H1 (cell line): ENCODE measurements at regions of chr2 and their contacts with region 1.

Region 1: DNA sequence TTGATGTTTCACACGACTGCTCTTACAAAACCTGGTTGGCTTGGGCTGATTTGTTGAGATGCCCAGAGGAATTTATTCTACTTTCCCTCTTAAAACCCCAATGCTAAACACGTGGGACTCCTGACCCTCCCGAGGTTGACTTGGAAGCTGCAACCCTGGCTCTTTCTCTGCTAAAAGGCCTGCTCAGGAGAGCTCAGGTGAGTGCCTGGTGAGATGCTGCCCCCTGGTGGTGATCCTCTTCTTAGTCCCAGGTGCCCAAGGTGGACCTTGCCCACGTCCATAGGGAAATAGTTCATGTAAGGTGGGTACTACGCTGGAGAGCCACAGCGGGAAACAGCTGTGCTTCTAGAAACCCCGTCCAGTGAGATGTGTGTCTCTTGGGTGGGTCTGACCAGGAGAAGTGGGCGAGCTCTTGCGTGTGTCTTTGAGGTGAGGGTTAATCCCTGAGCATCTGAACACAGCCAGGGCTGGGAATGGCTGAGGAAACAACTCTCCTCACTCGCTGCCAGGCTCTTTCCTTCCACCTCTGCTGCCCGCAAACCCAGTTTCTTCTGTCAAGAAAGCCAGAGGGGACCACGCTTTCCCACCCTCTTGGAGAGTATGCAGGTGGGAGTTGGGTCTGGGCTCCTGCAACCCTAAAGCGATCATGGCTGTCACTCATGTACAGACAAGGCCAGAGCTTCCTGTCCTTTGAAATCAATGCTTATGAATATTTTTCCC is 25.5 kb upstream of the PXDN start:
- DNase-seq: peak; percentile 87 to 95
- H3K4me3 ChIP-seq: no peak overlapping the region
- H3K27ac ChIP-seq: no peak overlapping the region
- H3K4me1 ChIP-seq: peaks cover 3 to 20% (median 14%) of the 10 kb centered on the region in 4 experiments
- H3K27me3 ChIP-seq: no peaks in the 10 kb centered on the region; a peak in 1 of 7 replicates
- CTCF ChIP-seq: peak; percentile 91 to 98 (median 95)
- EP300 ChIP-seq: no peak
- POLR2A ChIP-seq: no peak
- RAD21 ChIP-seq: peak; percentile 98

Region 2: GRCh38 chr2:1550658-1551316 is 219.1 kb before region 1 on chr2:
- CTCF ChIA-PET with region 1: interaction called, 65 read pairs
- POLR2A ChIA-PET with region 1: no interaction called
- DNase-seq: peak in 1 of 2 experiments; percentile 91
- H3K4me3 ChIP-seq: no peak overlapping the region
- H3K27ac ChIP-seq: no peak overlapping the region
- H3K4me1 ChIP-seq: no peaks in the 10 kb centered on the region
- H3K27me3 ChIP-seq: peaks cover 0 to 4% (median 3%) of the 10 kb centered on the region in 4 experiments; a peak in 3 of 7 replicates
- CTCF ChIP-seq: peak; percentile 85 to 94 (median 91)
- EP300 ChIP-seq: no peak
- POLR2A ChIP-seq: no peak
- RAD21 ChIP-seq: peak; percentile 71 to 81

Region 3: GRCh38 chr2:1617566-1617982 is 152.3 kb before region 1 on chr2:
- CTCF ChIA-PET with region 1: no interaction called
- POLR2A ChIA-PET with region 1: no interaction called
- DNase-seq: no peak
- H3K4me3 ChIP-seq: no peak overlapping the region
- H3K27ac ChIP-seq: no peak overlapping the region
- H3K4me1 ChIP-seq: peaks cover 12 to 31% (median 22%) of the 10 kb centered on the region in 4 experiments
- H3K27me3 ChIP-seq: no peaks in the 10 kb centered on the region; a peak in 1 of 7 replicates
- CTCF ChIP-seq: no peak
- EP300 ChIP-seq: no peak
- POLR2A ChIP-seq: no peak
- RAD21 ChIP-seq: no peak

Region 4: DNA sequence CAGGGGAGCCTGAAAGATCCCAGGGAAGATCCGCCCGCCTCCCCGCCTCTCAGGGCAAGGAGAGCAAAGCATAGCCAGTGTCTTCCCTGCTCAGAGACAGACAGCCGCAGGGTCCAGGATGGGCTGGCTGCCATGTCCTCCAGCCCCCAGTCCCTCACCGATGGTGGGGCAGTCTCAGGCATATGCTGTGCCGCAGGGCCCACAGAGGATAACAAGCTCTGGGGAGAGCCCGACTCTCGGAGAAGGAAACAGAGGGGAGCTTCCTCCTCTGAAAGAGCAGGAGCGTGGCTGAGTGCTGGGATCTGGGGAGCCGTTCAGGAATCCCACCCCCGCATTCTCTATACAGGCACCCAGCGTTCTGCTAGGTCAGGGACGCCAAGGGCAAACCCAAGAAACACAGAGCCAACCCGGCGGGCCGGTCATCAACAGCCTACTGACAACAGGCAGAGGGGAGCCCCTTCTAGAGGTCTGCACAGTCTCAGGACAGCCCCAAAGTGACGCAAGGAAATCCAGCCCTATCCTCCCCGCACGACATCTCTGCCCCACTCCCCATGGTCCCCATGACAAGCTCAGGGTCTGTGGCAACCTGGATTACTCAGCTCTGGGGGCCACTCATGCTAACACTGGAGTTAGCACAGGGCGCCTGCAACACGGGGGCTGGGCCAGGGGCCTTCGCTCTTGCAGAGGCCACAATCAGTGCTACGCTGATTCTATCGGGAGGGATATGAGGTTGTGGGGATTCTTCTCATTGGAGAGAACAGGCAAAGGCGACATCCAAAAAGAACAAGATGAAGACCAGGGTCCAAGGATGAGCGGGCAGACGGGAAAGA is 107.3 kb before region 1 on chr2:
- CTCF ChIA-PET with region 1: interaction called, 14 read pairs
- POLR2A ChIA-PET with region 1: no interaction called
- DNase-seq: no peak
- H3K4me3 ChIP-seq: no peak overlapping the region
- H3K27ac ChIP-seq: no peak overlapping the region; the same call in 1 of the 2 replicates
- H3K4me1 ChIP-seq: 0 out of 7 replicates have a peak, but pooled peaks cover 0 to 2% (median 0%) of the 10 kb centered on the region in 4 experiments
- H3K27me3 ChIP-seq: no peaks in the 10 kb centered on the region
- CTCF ChIP-seq: no peak
- EP300 ChIP-seq: no peak
- POLR2A ChIP-seq: no peak
- RAD21 ChIP-seq: no peak

Region 5: DNA sequence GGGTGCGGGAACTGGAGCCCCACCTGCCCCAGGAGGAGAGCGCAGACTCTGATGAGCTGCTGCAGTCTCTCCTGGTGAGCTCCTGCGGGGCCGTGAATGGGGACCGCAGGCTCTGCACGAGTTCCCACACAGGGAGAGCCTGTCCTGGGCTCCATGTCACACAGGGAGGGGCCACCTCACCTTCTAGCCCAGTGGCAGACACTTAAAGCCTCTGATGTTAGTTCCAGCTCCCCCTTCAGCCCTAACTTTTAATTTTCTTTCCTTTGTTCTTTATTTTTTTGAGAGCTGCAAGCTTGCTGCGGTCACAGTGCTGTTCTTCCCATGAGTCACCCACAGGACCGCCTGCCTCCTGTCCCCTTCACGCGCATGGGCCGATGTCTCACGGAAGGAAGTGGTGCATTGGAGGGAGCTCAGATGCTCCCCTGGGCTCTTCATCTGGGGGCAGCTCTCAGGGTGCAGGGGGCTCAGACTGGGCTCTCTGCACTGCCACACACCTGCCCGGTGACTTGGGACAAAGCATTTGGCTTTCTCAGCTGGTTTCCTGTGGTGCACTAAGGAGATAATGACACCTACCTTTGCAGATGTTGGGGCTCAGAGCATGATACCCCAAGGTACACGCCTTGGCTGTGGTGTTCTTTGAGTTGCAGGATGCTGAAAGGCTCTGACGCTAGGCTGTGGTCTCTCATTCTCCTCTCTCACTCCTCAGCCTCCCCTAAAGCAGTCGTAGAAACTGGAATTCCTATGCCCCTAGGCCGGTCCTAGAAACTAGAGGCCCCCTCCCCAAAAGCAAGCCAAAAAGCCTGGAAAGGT is 11.6 kb after region 1 on chr2:
- CTCF ChIA-PET with region 1: interaction called, 32 read pairs
- POLR2A ChIA-PET with region 1: interaction called, 4 read pairs
- DNase-seq: no peak
- H3K4me3 ChIP-seq: no peak overlapping the region
- H3K27ac ChIP-seq: no peak overlapping the region
- H3K4me1 ChIP-seq: no peaks in the 10 kb centered on the region; a peak in 1 of 7 replicates
- H3K27me3 ChIP-seq: no peaks in the 10 kb centered on the region
- CTCF ChIP-seq: no peak
- EP300 ChIP-seq: no peak
- POLR2A ChIP-seq: no peak
- RAD21 ChIP-seq: no peak

Region 6: DNA sequence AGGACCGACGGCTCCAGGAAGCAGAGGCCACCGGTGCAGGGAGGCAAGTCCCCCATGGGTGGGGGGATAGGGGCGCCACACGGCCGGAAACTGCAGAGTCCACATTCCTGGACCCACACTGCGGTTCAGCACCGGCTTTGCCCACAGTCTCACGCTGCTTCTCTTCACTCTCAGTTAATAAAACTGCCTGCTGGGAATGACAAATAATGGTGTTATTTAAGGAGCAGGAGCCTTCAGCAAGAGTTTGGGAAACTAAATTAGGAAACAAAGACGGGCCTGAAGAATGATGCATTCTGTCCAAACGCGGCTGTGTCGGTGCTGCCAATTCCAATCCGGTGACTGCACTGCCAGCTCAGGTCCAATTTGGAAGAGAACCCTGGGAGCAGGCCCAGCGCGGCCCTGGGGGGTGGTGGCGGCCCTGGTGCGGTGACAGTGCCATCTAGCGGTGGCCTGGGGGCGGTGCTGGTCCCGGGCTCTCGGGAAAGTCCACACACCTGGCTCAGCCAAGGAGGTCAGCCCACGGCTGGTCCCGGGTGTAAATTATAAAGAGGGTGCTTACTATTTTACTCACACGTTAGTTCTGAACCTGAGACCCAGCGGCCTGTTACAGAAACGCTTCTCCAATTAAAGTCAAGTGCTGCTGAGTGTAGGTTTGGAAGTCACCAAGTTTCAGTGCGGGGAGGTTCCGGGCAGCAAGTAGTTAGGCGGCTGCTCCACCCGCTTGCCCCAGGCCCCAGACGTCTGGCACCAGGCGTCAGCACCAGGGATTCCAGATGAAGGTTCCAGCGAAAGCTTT is 47.6 kb after region 1 on chr2:
- CTCF ChIA-PET with region 1: interaction called, 36 read pairs
- POLR2A ChIA-PET with region 1: no interaction called
- DNase-seq: peak; percentile 38 to 96
- H3K4me3 ChIP-seq: no peak overlapping the region
- H3K27ac ChIP-seq: no peak overlapping the region
- H3K4me1 ChIP-seq: peaks cover 0 to 2% (median 1%) of the 10 kb centered on the region in 4 experiments; a peak in 2 of 7 replicates
- H3K27me3 ChIP-seq: no peaks in the 10 kb centered on the region
- CTCF ChIP-seq: peak; percentile 89 to 91 (median 91)
- EP300 ChIP-seq: 0 out of 3 replicates have a peak, but pooled peaks of 1 of the 2 experiments have one; percentile 62
- POLR2A ChIP-seq: no peak
- RAD21 ChIP-seq: peak; percentile 87 to 93

Region 7: DNA sequence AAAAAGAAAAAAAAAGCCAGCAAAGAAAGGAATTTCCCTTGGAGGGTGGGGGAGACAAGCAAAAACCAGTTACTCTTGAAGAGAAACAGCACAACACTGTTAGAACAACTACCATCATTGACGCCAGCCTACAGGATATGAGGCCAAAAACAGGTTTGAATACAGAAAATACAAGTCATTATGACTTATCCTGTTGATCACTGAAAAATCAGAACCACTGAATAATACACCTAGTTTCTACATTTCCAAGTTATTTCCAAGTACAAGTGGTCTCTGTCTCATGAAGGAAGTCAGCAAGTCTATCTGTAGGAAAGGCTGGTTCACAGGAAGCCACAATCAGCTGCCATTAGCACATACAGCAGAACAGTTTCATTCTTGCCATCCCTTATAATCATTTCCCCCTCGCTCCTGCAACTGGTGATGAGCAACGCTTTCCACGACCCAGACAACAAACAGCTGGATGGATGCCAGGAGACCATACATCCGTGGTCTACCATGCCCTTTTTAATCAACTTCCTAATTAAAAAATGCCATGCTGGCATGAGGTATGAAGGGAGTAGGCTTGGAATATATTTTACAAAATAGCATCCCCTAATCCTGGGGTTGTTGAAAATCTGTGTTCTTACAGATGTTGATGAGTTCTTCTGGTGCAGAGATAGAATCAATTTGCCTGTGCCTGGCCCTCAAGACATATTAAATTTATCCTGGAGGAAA is 550.8 kb after region 1 on chr2:
- CTCF ChIA-PET with region 1: no interaction called
- POLR2A ChIA-PET with region 1: no interaction called
- DNase-seq: no peak
- H3K4me3 ChIP-seq: no peak overlapping the region
- H3K27ac ChIP-seq: no peak overlapping the region
- H3K4me1 ChIP-seq: peaks cover 2 to 8% (median 5%) of the 10 kb centered on the region in 4 experiments; a peak in 5 of 7 replicates
- H3K27me3 ChIP-seq: no peaks in the 10 kb centered on the region; a peak in 2 of 7 replicates
- CTCF ChIP-seq: no peak
- EP300 ChIP-seq: no peak
- POLR2A ChIP-seq: no peak
- RAD21 ChIP-seq: no peak